ENCODE measurements at regions of chr17 and their contacts with region 1.

Region 1: GRCh38 chr17:8118769-8119580 is 661 bp upstream of the ALOXE3 start:
- DNase-seq: peak; percentile 70 to 90 (median 83)
- ATAC-seq: peak; percentile 62
- H3K4me3 ChIP-seq: peak overlapping the region; percentile 69 to 77
- H3K4me3 Mint-ChIP-seq: peak overlapping the region; percentile 93
- H3K27ac ChIP-seq: peak overlapping the region; percentile 32 to 53
- H3K27ac Mint-ChIP-seq: peak overlapping the region; percentile 95
- H3K4me1 ChIP-seq: peaks cover 46% of the 10 kb centered on the region
- H3K4me1 Mint-ChIP-seq: peaks cover 45% of the 10 kb centered on the region
- H3K27me3 ChIP-seq: peaks cover 0 to 57% of the 10 kb centered on the region in 2 experiments
- H3K27me3 Mint-ChIP-seq: peaks cover 33% of the 10 kb centered on the region
- CTCF ChIP-seq: peak; percentile 88

Region 2: DNA sequence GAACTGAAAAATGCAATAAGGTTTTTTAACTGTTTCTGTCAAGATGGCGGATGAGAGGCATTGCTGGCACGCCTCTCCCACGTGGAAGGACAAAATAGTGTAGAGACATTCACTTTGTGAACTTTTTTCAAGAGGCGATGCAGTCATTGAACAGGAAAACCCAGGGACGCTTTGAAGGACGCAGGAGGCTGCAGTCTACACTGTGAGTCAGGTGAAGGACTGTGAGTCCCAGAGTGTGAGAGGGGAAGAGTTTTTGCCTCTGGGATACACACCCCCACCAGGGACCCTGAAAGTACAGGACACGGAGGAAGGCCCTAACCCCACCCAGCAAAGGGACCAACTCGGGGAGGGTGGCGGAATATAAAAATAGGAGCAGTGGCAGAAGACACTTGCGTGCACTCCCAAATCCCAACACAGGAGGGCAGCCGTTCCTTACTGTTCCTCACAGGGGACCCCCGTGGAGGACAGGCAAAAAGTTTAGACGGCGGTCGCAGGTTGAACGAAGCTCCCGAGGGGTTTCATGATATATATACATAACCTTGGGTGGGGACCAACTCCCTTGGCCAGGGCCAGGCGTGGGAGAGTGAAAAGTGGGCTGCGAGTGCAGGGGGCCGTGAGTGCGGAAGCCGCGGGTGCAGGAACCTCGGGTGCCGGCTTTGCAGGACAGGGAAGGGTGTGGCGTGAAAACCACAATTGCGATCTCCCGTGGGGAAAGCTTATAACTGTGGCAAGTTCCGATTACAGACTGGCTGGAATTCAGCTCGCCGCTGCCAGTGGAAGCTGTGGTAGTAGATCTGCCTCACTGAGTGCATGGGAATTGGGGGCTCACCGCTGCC is 1205.1 kb before region 1 on chr17:
- CTCF ChIA-PET with region 1: no interaction called
- POLR2A ChIA-PET with region 1: no interaction called
- intact Hi-C with region 1: no loop called
- DNase-seq: peak; percentile 65 to 85 (median 81)
- ATAC-seq: peak; percentile 91
- H3K4me3 ChIP-seq: peak overlapping the region; percentile 23 to 70
- H3K4me3 Mint-ChIP-seq: peak overlapping the region; percentile 89
- H3K27ac ChIP-seq: no peak overlapping the region
- H3K27ac Mint-ChIP-seq: no peak overlapping the region
- H3K4me1 ChIP-seq: peaks cover 5% of the 10 kb centered on the region
- H3K4me1 Mint-ChIP-seq: peaks cover 18% of the 10 kb centered on the region
- H3K27me3 ChIP-seq: no peaks in the 10 kb centered on the region
- H3K27me3 Mint-ChIP-seq: peaks cover 2% of the 10 kb centered on the region
- CTCF ChIP-seq: peak; percentile 91

Region 3: GRCh38 chr17:7931709-7932482 is 187.1 kb before region 1 on chr17 and contains the starts of genes CNTROB and TRAPPC1:
- CTCF ChIA-PET with region 1: no interaction called
- POLR2A ChIA-PET with region 1: no interaction called
- intact Hi-C with region 1: loop called in 1 of 2 experiments (anchors 5 kb)
- DNase-seq: peak; percentile 99 to 100 (median 99)
- ATAC-seq: peak; percentile 93
- H3K4me3 ChIP-seq: peak within 1 kb of the TSS; percentile 96
- H3K4me3 Mint-ChIP-seq: peak within 1 kb of the TSS; percentile 100
- H3K27ac ChIP-seq: peak within 1 kb of the TSS; percentile 85
- H3K27ac Mint-ChIP-seq: peak within 1 kb of the TSS; percentile 99
- H3K4me1 ChIP-seq: peaks cover 22% of the 10 kb centered on the region
- H3K4me1 Mint-ChIP-seq: peaks cover 50% of the 10 kb centered on the region
- H3K27me3 ChIP-seq: no peaks in the 10 kb centered on the region
- H3K27me3 Mint-ChIP-seq: no peaks in the 10 kb centered on the region
- CTCF ChIP-seq: no peak
- total RNA-seq, gene CNTROB: 20.1 to 23.6 TPM
- total RNA-seq, gene TRAPPC1: 29.6 to 39.4 TPM

Region 4: DNA sequence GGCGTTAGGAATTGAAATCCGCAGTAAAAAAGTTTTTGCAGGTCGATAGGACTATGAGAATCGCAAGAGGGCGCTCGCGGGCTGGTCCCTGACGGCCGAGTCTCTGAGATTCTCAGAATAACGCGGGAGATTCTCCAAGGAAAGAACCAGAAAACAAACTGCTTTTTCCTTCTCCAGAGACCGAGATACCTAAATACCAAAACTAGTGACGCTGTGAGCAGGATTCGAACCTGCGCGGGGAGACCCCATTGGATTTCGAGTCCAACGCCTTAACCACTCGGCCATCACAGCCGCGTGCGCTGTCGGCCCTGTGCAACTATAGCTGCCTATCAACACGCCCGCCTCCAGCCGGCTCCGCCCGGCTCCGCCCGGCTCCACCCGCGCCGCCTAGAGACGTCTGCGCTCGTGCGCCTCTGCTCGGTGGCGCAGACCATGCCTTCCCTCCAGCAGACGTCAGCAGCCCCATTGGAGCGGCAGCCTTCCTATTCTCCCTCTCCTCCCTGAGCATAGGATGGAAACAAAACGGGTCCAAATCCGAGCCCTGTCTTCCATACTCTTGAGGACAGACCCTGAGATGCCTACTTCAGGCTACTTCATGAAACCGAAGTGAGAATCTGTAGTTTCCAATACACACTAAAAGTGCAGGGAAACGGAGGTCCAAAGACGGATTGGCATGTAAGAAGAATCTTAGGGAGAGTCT is 19.8 kb after region 1 on chr17:
- CTCF ChIA-PET with region 1: interaction called, 81 read pairs
- POLR2A ChIA-PET with region 1: interaction called, 32 read pairs
- intact Hi-C with region 1: loop called in 1 of 2 experiments (anchors 1 kb)
- DNase-seq: peak; percentile 92 to 98 (median 95)
- ATAC-seq: peak; percentile 84
- H3K4me3 ChIP-seq: peak overlapping the region; percentile 70 to 75
- H3K4me3 Mint-ChIP-seq: no peak overlapping the region
- H3K27ac ChIP-seq: peak overlapping the region; percentile 89 to 97
- H3K27ac Mint-ChIP-seq: no peak overlapping the region
- H3K4me1 ChIP-seq: peaks cover 18% of the 10 kb centered on the region
- H3K4me1 Mint-ChIP-seq: no peaks in the 10 kb centered on the region
- H3K27me3 ChIP-seq: no peaks in the 10 kb centered on the region
- H3K27me3 Mint-ChIP-seq: no peaks in the 10 kb centered on the region
- CTCF ChIP-seq: peak; percentile 87

Region 5: GRCh38 chr17:8173056-8173870 is 54.3 kb after region 1 on chr17:
- CTCF ChIA-PET with region 1: interaction called, 4 read pairs
- POLR2A ChIA-PET with region 1: interaction called, 17 read pairs
- intact Hi-C with region 1: no loop called
- DNase-seq: peak in 7 of 9 experiments; percentile 61 to 96 (median 80)
- ATAC-seq: peak; percentile 84
- H3K4me3 ChIP-seq: peak overlapping the region; percentile 39 to 46
- H3K4me3 Mint-ChIP-seq: peak overlapping the region; percentile 83
- H3K27ac ChIP-seq: peak overlapping the region; percentile 94 to 98
- H3K27ac Mint-ChIP-seq: peak overlapping the region; percentile 100
- H3K4me1 ChIP-seq: peaks cover 40% of the 10 kb centered on the region
- H3K4me1 Mint-ChIP-seq: peaks cover 50% of the 10 kb centered on the region
- H3K27me3 ChIP-seq: no peaks in the 10 kb centered on the region
- H3K27me3 Mint-ChIP-seq: no peaks in the 10 kb centered on the region
- CTCF ChIP-seq: no peak

Region 6: GRCh38 chr17:8248751-8249607 is 130.0 kb after region 1 on chr17 and contains the start of gene PFAS:
- CTCF ChIA-PET with region 1: interaction called, 17 read pairs
- POLR2A ChIA-PET with region 1: interaction called, 19 read pairs
- intact Hi-C with region 1: loop called (anchors 1 kb)
- DNase-seq: peak; percentile 92 to 98 (median 96)
- ATAC-seq: peak; percentile 39
- H3K4me3 ChIP-seq: peak within 1 kb of the TSS; percentile 84 to 95
- H3K4me3 Mint-ChIP-seq: peak within 1 kb of the TSS; percentile 98
- H3K27ac ChIP-seq: peak within 1 kb of the TSS; percentile 97 to 98
- H3K27ac Mint-ChIP-seq: peak within 1 kb of the TSS; percentile 100
- H3K4me1 ChIP-seq: peaks cover 34% of the 10 kb centered on the region
- H3K4me1 Mint-ChIP-seq: peaks cover 48% of the 10 kb centered on the region
- H3K27me3 ChIP-seq: no peaks in the 10 kb centered on the region
- H3K27me3 Mint-ChIP-seq: no peaks in the 10 kb centered on the region
- CTCF ChIP-seq: no peak
- total RNA-seq, gene PFAS: 23.8 to 25.0 TPM

Region 7: DNA sequence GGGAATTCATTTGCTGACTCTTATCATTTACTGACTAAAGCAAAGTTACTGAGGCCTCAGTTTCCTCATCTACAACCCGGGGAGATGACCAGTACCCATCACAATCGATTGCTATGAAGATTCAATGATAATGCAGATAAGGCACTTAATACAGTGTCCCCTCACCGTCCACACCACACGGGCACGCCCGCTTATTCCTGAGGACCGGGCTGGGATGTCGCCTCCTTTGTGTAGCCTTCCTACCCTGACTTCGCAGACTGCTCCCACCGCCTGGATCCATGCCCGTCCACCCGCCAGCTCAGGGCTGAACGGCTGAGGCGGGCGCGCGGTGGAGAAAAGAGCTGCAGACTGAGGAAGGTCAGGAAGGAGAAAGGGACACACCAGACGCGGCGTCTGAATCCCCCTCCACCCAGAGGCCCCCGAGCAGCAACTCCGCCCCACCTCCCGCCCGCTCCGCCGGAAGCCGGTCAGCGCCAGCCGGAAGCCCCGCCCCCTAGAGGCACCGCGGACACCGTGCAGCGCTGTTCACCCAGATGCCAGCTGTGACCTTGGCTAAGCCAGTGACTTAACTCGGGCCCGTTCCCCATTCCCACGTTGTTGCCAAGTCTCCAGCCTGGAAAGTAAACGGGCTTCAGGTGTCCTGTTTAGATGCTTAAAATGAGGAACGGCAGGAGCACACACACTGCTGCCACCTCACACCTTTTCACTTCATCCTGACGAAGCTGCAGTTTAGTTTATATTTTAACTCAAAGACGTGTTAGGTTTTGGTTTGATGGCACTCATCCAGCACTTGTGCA is 257.5 kb after region 1 on chr17 and contains the start of gene KRABD2:
- CTCF ChIA-PET with region 1: no interaction called
- POLR2A ChIA-PET with region 1: no interaction called
- intact Hi-C with region 1: loop called (anchors 5 to 10 kb)
- DNase-seq: peak; percentile 81 to 93 (median 92)
- ATAC-seq: peak; percentile 100
- H3K4me3 ChIP-seq: peak within 1 kb of the TSS; percentile 71 to 91
- H3K4me3 Mint-ChIP-seq: peak within 1 kb of the TSS; percentile 90
- H3K27ac ChIP-seq: peak within 1 kb of the TSS; percentile 63 to 64
- H3K27ac Mint-ChIP-seq: peak within 1 kb of the TSS; percentile 88
- H3K4me1 ChIP-seq: peaks cover 35% of the 10 kb centered on the region
- H3K4me1 Mint-ChIP-seq: peaks cover 49% of the 10 kb centered on the region
- H3K27me3 ChIP-seq: no peaks in the 10 kb centered on the region
- H3K27me3 Mint-ChIP-seq: no peaks in the 10 kb centered on the region
- CTCF ChIP-seq: peak; percentile 47

Region 8: GRCh38 chr17:9170853-9171252 is 1051.9 kb after region 1 on chr17:
- CTCF ChIA-PET with region 1: no interaction called
- POLR2A ChIA-PET with region 1: no interaction called
- intact Hi-C with region 1: no loop called
- DNase-seq: no peak
- ATAC-seq: no peak
- H3K4me3 ChIP-seq: no peak overlapping the region
- H3K4me3 Mint-ChIP-seq: no peak overlapping the region
- H3K27ac ChIP-seq: no peak overlapping the region
- H3K27ac Mint-ChIP-seq: no peak overlapping the region
- H3K4me1 ChIP-seq: no peaks in the 10 kb centered on the region
- H3K4me1 Mint-ChIP-seq: no peaks in the 10 kb centered on the region
- H3K27me3 ChIP-seq: no peaks in the 10 kb centered on the region
- H3K27me3 Mint-ChIP-seq: peaks cover 9% of the 10 kb centered on the region
- CTCF ChIP-seq: no peak